ENCODE measurements at regions of chr7 and their contacts with region 1.

Region 1: GRCh38 chr7:96303686-96304443 is 18.0 kb downstream of the SLC25A13 start:
- DNase-seq: no peak
- H3K4me3 ChIP-seq: no peak overlapping the region
- H3K27ac ChIP-seq: no peak overlapping the region
- H3K4me1 ChIP-seq: peaks cover 69% of the 10 kb centered on the region
- H3K27me3 ChIP-seq: no peaks in the 10 kb centered on the region
- CTCF ChIP-seq: no peak

Region 2: GRCh38 chr7:96709381-96710228 is 405.7 kb after region 1 on chr7 and contains the start of gene SEM1:
- intact Hi-C with region 1: loop called (anchors 10 kb)
- DNase-seq: peak; percentile 87
- H3K4me3 ChIP-seq: peak within 1 kb of the TSS; percentile 86
- H3K27ac ChIP-seq: peak within 1 kb of the TSS; percentile 91
- H3K4me1 ChIP-seq: peaks cover 42% of the 10 kb centered on the region
- H3K27me3 ChIP-seq: no peaks in the 10 kb centered on the region
- CTCF ChIP-seq: no peak
- total RNA-seq, gene SEM1: 51.0 TPM

Measured in left ventricle myocardium inferior (tissue), 1 donor.